Naive thymus-derived CD4-positive, alpha-beta T cell (primary cell): ENCODE measurements at regions of chr17 and their contacts with region 1.

Region 1: GRCh38 chr17:17391668-17392370 is 85.0 kb upstream of the MED9 start:
- DNase-seq: peak; percentile 24 to 85 (median 78)
- ATAC-seq: peak; percentile 88
- H3K4me3 ChIP-seq: peak overlapping the region; percentile 64
- H3K4me3 Mint-ChIP-seq: peak overlapping the region; percentile 82 to 92 (median 89)
- H3K27ac ChIP-seq: peak overlapping the region; percentile 54
- H3K27ac Mint-ChIP-seq: peak overlapping the region; percentile 58 to 91 (median 88)
- H3K4me1 ChIP-seq: peaks cover 6 to 18% of the 10 kb centered on the region in 2 donors
- H3K4me1 Mint-ChIP-seq: peaks cover 14 to 33% (median 21%) of the 10 kb centered on the region in 7 donors
- H3K27me3 ChIP-seq: no peaks in the 10 kb centered on the region
- H3K27me3 Mint-ChIP-seq: peaks cover 0 to 12% (median 0%) of the 10 kb centered on the region in 5 donors

Region 2: GRCh38 chr17:17322516-17323510 is 69.0 kb before region 1 on chr17:
- CTCF ChIA-PET with region 1: no interaction called
- POLR2A ChIA-PET with region 1: no interaction called
- intact Hi-C with region 1: no loop called
- DNase-seq: no peak
- ATAC-seq: no peak
- H3K4me3 ChIP-seq: no peak overlapping the region
- H3K4me3 Mint-ChIP-seq: no peak overlapping the region
- H3K27ac ChIP-seq: no peak overlapping the region
- H3K27ac Mint-ChIP-seq: no peak overlapping the region
- H3K4me1 ChIP-seq: no peaks in the 10 kb centered on the region
- H3K4me1 Mint-ChIP-seq: no peaks in the 10 kb centered on the region
- H3K27me3 ChIP-seq: no peaks in the 10 kb centered on the region
- H3K27me3 Mint-ChIP-seq: no peaks in the 10 kb centered on the region

Region 3: DNA sequence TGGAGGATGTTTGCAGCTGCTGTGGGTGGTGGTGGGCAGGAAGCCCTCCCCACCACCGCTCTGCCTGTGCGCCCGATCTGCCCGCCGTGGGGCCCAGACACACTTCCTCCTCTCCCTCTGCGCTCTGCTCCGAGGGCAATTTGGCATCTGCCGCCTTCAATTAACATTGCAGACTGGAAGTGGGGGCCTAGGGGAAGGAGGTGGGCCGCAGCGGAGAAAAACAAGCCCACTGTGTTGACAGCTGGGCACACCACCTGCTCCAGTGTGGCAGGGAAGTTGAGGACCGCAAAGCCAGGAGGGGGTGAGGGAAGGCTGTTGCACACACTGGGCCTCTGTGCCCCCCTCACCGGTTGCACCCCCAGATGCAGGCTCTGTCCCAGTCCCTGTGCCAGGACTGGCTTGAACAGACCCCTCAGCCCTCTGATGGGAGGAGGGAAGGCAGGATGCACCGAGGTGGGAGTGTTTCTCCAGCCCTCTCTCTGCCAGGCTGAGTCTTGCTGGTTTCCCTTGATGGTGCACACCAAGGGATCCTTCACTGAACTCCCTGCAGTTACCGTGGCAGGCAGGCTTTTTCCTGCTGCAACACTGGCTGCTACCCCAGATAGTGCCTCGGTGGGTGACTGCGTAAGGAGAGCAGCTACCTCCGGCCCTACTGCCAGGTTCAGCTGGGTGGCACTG is 12.2 kb after region 1 on chr17:
- CTCF ChIA-PET with region 1: no interaction called
- POLR2A ChIA-PET with region 1: interaction called, 16 read pairs
- intact Hi-C with region 1: loop called in 1 of 2 experiments (anchors 1 kb)
- DNase-seq: peak in 8 of 9 donors; percentile 31 to 69 (median 67)
- ATAC-seq: peak; percentile 90
- H3K4me3 ChIP-seq: peak overlapping the region; percentile 33
- H3K4me3 Mint-ChIP-seq: peak overlapping the region; percentile 68 to 90 (median 81)
- H3K27ac ChIP-seq: peak overlapping the region; percentile 67
- H3K27ac Mint-ChIP-seq: peak overlapping the region; percentile 69 to 97 (median 94)
- H3K4me1 ChIP-seq: peaks cover 31 to 49% of the 10 kb centered on the region in 2 donors
- H3K4me1 Mint-ChIP-seq: peaks cover 42 to 93% (median 88%) of the 10 kb centered on the region in 7 donors
- H3K27me3 ChIP-seq: no peaks in the 10 kb centered on the region
- H3K27me3 Mint-ChIP-seq: no peaks in the 10 kb centered on the region

Region 4: GRCh38 chr17:17416007-17416399 is 24.2 kb after region 1 on chr17:
- CTCF ChIA-PET with region 1: interaction called, 10 read pairs
- POLR2A ChIA-PET with region 1: interaction called, 13 read pairs
- intact Hi-C with region 1: loop called in 1 of 2 experiments (anchors 1 kb)
- DNase-seq: peak in 6 of 9 donors; percentile 19 to 48 (median 30)
- ATAC-seq: peak; percentile 70
- H3K4me3 ChIP-seq: no peak overlapping the region
- H3K4me3 Mint-ChIP-seq: peak overlapping the region in 1 of 10 donors; percentile 46
- H3K27ac ChIP-seq: no peak overlapping the region
- H3K27ac Mint-ChIP-seq: peak overlapping the region in 8 of 9 donors; percentile 17 to 77 (median 41)
- H3K4me1 ChIP-seq: peaks cover 0 to 9% of the 10 kb centered on the region in 2 donors
- H3K4me1 Mint-ChIP-seq: peaks cover 10 to 28% (median 22%) of the 10 kb centered on the region in 7 donors
- H3K27me3 ChIP-seq: no peaks in the 10 kb centered on the region
- H3K27me3 Mint-ChIP-seq: peaks cover 0 to 5% (median 0%) of the 10 kb centered on the region in 5 donors

Region 5: DNA sequence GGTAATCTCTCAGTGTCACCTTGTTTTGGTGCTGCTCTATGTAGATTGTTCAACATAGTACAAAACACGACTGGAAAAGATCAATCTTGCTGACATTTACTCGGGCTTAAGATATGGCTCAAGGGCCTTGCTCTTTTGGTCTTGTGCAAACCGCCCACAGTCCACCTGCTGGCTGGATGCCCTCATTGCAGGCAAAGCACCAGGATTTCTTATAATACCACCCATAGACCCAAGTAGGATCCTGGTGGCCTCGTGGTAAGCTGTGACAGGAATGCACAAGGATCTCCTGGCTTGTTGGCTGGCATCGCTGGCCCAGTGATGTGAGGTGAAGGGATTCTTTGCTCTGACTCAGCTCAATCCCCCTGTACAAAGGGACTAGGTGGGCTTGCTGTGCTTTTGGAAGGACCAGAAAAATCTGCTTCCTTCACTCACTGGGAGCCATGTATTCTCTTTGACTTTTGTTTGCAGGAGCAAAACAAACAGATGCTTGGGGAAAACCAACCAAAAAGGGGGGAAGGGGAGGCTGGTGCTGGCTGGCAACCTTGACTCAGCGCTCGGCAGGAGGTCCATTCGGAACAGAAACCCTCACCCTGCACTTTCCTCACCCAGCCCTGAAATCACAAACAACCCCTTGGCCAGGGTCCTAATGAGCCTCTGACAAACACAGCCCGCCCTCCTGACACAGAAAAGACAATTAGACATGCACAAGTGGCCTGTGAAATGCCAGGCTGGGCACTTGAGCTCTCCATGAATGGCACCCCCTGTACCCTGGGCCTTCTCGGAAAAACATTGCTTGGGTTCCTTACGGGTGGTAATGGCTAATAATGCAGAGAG is 48.4 kb after region 1 on chr17:
- CTCF ChIA-PET with region 1: interaction called, 13 read pairs
- POLR2A ChIA-PET with region 1: no interaction called
- intact Hi-C with region 1: loop called in 1 of 2 experiments (anchors 1 kb)
- DNase-seq: peak; percentile 49 to 79 (median 63)
- ATAC-seq: peak; percentile 79
- H3K4me3 ChIP-seq: no peak overlapping the region
- H3K4me3 Mint-ChIP-seq: no peak overlapping the region
- H3K27ac ChIP-seq: no peak overlapping the region
- H3K27ac Mint-ChIP-seq: peak overlapping the region in 2 of 9 donors; percentile 56 to 76
- H3K4me1 ChIP-seq: no peaks in the 10 kb centered on the region
- H3K4me1 Mint-ChIP-seq: peaks cover 0 to 9% (median 7%) of the 10 kb centered on the region in 7 donors
- H3K27me3 ChIP-seq: no peaks in the 10 kb centered on the region
- H3K27me3 Mint-ChIP-seq: no peaks in the 10 kb centered on the region

Region 6: GRCh38 chr17:17476865-17477467 is 85.1 kb after region 1 on chr17 and contains the start of gene MED9:
- CTCF ChIA-PET with region 1: no interaction called
- POLR2A ChIA-PET with region 1: no interaction called
- intact Hi-C with region 1: loop called in 1 of 2 experiments (anchors 1 kb)
- DNase-seq: peak; percentile 90 to 98 (median 94)
- ATAC-seq: peak; percentile 100
- H3K4me3 ChIP-seq: peak within 1 kb of the TSS; percentile 98
- H3K4me3 Mint-ChIP-seq: peak within 1 kb of the TSS; percentile 85 to 92 (median 92)
- H3K27ac ChIP-seq: peak within 1 kb of the TSS; percentile 87
- H3K27ac Mint-ChIP-seq: peak within 1 kb of the TSS; percentile 72 to 95 (median 92)
- H3K4me1 ChIP-seq: peaks cover 10 to 29% of the 10 kb centered on the region in 2 donors
- H3K4me1 Mint-ChIP-seq: peaks cover 20 to 58% (median 49%) of the 10 kb centered on the region in 7 donors
- H3K27me3 ChIP-seq: no peaks in the 10 kb centered on the region
- H3K27me3 Mint-ChIP-seq: peaks cover 0 to 11% (median 0%) of the 10 kb centered on the region in 5 donors
- total RNA-seq, gene MED9: 14.0 to 24.1 (median 17.2) TPM